Activated CD4-positive, alpha-beta T cell treated with anti-CD3 and anti-CD28 coated beads, Interleukin-2, amount 10 ng/mL, durations not matched to agents 7 days and 5 days (primary cell): ENCODE measurements at regions of chr1 and their contacts with region 1.

Region 1: DNA sequence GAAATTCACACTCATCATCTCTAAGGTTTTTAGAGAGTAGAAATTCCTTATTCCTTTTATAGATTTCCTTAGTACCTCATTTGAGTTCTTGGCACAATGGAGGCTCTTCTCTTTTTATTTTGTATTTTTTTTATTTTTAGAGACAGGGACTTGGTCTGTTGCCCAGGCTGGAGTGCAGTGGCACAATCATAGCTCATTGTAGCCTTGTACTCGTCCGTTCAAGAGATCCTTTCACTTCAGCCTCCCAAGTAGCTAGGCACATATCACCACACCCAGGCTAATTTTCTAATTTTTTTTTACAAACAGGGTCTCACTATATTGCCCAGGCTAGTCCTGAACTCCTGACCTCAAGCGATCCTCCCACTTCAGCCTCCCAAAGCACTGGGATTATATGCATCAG is 29.6 kb downstream of the RGL1 start:
- DNase-seq: no peak
- H3K4me3 Mint-ChIP-seq: no peak overlapping the region
- H3K27ac Mint-ChIP-seq: no peak overlapping the region
- H3K4me1 Mint-ChIP-seq: no peaks in the 10 kb centered on the region
- H3K27me3 Mint-ChIP-seq: no peaks in the 10 kb centered on the region

Region 2: DNA sequence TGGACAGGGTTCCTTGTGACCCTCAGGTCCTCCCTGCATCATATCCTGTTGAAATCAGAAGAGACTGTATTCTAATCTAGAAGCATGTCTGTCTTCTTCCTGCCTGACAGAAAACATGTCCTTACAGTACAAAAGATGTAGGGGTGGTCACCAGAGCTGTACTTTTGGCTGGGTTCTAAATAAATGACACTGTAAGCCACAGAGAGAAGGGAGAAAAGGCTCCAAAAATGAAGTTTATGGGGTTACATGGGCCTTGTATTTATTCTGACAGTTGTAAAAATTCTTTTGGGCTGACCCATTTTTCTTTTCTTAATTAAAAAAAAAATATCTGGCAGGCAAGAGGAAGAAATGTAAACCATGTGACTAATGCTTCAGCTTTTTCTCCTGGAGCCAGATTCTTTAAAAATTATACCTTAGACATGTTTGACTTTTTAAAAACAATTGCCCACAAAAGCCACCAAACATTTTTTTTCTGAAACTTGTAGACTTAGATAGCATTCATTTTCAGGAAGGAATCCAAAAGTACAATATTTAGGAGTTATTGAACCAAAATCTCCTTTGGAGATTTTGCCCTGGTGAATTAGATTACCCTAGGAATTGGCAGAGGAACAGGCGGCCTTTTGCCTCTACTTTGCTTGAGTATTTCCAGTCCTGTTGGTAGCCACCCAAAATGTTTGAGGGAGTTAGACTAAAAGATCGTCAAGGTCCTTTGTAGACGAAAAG is 12.5 kb before region 1 on chr1:
- CTCF ChIA-PET with region 1: interaction called, 11 read pairs
- POLR2A ChIA-PET with region 1: no interaction called
- DNase-seq: no peak
- H3K4me3 Mint-ChIP-seq: no peak overlapping the region
- H3K27ac Mint-ChIP-seq: no peak overlapping the region
- H3K4me1 Mint-ChIP-seq: peaks cover 1% of the 10 kb centered on the region
- H3K27me3 Mint-ChIP-seq: no peaks in the 10 kb centered on the region

Region 3: GRCh38 chr1:184036517-184036949 is 202.0 kb after region 1 on chr1:
- CTCF ChIA-PET with region 1: no interaction called
- POLR2A ChIA-PET with region 1: no interaction called
- DNase-seq: no peak
- H3K4me3 Mint-ChIP-seq: peak overlapping the region; percentile 34
- H3K27ac Mint-ChIP-seq: no peak overlapping the region
- H3K4me1 Mint-ChIP-seq: peaks cover 17% of the 10 kb centered on the region
- H3K27me3 Mint-ChIP-seq: peaks cover 79% of the 10 kb centered on the region

Region 4: DNA sequence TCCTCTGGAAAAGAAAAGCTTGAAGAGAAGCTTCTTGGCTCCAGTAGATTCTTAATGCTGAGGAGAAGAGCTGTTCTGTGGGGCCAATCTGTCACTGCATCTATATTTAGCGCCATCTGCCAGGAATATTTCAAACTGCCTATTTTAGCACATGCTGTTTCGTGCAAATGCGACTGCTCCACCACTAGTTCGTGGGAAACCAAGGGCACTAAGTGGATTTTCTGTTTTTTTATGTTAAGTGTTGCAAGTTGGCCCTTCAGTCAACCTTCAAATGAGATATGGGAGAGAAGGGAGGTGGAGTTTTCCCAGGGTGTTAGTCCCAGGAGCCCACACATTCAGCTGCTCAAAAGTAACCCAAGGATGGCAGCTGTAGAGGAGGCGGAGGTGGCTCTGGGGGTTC is 308.9 kb after region 1 on chr1:
- CTCF ChIA-PET with region 1: no interaction called
- POLR2A ChIA-PET with region 1: no interaction called
- DNase-seq: no peak
- H3K4me3 Mint-ChIP-seq: no peak overlapping the region
- H3K27ac Mint-ChIP-seq: no peak overlapping the region
- H3K4me1 Mint-ChIP-seq: no peaks in the 10 kb centered on the region
- H3K27me3 Mint-ChIP-seq: peaks cover 19% of the 10 kb centered on the region